Dorsolateral prefrontal cortex (tissue), 120 donors: ENCODE measurements at regions of chr9 and their contacts with region 1.

Region 1: DNA sequence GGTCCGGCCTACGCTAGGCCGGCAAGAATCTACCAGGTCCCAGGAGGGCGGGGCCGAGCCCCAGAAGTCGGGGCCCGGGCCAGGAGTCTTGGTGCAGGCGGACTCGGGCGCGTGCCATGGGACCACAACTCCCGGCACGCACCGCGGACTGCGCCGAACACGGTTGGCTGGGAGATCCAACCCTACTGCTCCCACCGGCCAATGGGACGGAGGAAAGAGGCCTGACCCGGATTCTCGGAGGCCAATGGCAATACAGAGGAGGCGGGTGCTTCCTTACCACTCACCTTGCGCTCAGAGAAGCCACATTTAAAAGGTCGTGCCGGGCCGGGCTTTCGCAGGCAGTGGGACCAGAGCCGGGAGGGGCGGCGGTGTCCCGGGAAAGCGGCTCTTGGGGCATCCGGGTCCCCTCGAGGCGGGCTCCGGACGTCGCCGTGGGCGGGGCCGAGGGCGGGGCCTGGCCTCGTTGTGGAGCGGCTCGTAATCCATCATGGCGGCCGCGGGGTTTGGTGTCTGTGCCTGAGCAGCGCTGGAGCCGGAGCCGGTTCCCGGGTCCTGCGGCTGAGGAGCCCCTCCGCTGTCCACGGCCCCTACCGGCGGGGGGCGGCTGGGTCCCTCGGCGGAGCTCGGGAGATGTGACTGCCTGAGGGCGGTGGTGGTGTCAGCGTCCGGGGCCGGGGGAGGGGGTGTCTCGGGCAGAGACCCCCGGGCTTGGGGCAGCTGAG is 19.1 kb downstream of the EXOSC2 start:
- DNase-seq: peak; percentile 98 to 99 (median 98)
- H3K4me3 ChIP-seq: peak overlapping the region; percentile 74 to 99 (median 93)
- H3K27ac ChIP-seq: peak overlapping the region; percentile 91 to 100 (median 99)
- H3K27me3 ChIP-seq: no peaks in the 10 kb centered on the region
- CTCF ChIP-seq: peak in 11 of 56 donors; percentile 4 to 48 (median 24)

Region 2: DNA sequence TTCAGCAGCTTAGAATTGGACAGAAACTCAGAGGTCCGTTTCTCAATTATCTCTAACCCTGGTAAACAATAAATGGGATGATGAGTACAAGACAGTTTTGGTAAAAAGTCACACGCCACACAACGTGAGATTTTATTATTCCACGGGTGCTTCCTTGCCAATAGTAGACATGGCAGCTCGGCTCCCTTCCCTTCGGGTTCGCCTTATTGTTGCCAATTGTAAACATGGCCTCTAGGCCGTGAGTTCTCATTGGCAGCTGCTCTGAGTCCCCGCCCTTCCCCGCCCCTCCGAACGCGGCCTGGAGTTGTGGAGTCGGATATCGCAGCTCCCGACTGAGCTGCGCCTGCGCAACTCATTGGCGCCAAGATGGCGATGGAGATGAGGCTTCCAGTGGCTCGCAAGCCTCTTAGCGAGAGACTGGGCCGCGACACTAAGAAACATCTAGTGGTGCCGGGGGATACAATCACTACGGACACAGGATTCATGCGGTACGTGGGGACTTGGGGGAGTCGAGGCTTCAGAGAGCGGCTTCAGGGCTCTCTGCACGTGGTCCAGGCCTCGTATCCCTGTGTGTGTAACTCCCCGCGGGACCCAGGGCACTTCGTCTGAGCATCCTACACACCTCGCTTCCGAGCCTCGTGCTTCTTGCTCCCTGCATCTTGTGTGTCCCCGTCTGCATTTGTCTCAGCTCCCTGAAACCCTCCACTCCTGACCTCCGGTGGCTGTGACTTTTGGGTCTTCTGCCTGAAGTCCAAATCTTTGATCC is 19.1 kb before region 1 on chr9 and contains the start of gene EXOSC2:
- intact Hi-C with region 1: loop called in 1 of 2 experiments (anchors 2 kb)
- DNase-seq: peak; percentile 94 to 99 (median 98)
- H3K4me3 ChIP-seq: peak within 1 kb of the TSS; percentile 65 to 98 (median 86)
- H3K27ac ChIP-seq: peak within 1 kb of the TSS; percentile 28 to 94 (median 82)
- H3K27me3 ChIP-seq: no peaks in the 10 kb centered on the region
- CTCF ChIP-seq: peak in 42 of 56 donors; percentile 7 to 63 (median 33)
- total RNA-seq, gene EXOSC2: 24.6 to 43.4 (median 32.7) TPM

Region 3: DNA sequence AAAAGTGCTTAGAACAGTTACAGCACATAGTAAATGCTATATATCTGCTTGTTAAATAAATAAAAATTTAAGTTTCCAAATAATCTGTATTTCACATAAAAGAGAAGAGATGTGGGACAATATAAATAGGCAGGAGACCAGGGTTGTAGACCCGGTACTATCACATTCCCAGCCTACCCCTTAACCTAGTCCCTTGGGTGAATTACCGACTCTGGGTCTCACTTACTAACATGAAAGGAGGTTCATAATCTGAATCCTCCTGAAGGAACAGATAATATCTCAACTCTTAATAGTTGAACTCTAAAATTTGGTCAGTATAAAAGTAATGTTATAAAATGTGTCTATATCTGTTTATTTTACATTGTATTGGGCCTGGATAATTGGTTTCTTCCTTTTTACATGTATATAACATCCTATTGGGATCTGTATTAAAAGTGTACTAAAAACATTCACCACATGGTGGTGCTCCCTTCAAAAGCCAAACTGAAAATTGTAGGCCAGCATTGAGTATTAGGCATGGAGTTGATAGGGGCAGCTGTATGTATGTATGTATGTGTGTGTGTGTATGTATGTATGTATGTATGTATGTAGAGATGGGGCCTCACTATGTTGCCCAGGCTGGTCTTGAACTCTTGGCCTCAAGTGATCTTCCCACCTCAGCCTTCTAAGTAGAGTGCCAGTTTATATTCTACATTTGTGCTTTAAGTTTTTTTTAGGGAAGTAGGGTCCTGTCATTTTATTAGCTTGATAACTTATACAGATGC is 58.1 kb after region 1 on chr9:
- intact Hi-C with region 1: loop called in 1 of 2 experiments (anchors 5 kb)
- DNase-seq: no peak
- H3K4me3 ChIP-seq: no peak overlapping the region
- H3K27ac ChIP-seq: no peak overlapping the region
- H3K27me3 ChIP-seq: no peaks in the 10 kb centered on the region
- CTCF ChIP-seq: peak; percentile 53 to 87 (median 75)

Region 4: DNA sequence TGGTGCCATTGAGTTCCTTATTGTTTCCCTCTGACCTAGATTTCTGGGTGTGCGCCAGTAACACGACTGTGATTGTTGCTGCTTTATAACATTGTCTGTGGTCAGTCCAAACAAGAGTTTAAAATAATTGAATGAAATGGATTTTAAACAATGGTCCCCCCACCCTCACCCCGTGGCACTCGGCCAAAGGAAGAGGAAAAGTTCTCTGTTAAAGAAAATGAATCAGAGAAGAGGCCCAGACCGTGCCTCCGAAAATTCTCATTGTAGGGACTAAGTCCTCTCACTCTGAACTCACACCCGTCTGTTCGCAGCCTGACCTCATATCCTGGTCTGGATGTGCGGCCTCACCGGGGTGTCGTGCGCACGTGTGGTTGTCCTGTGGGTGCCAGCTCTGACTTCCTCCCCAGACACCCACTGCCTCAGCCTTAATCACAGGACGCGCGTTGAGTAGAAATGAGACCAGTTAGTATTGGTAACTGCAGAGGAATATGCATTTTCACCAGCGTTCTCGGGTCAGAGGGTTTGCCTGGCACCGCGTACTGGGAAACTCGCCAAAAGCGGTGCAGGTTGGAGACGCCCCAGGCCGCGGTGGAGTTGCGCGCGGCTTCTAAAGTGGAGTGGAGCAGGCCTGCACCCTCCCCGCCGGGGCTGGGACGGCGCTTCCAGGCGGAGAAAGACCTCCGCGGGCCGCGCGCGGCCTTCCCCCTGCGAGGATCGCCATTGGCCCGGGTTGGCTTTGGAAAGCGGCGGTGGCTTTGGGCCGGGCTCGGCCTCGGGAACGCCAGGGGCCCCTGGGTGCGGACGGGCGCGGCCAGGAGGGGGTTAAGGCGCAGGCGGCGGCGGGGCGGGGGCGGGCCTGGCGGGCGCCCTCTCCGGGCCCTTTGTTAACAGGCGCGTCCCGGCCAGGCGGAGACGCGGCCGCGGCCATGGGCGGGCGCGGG is 121.9 kb after region 1 on chr9 and contains the start of gene ABL1:
- intact Hi-C with region 1: loop called in 1 of 2 experiments (anchors 10 kb)
- DNase-seq: peak in 8 of 10 donors; percentile 46 to 74 (median 58)
- H3K4me3 ChIP-seq: peak within 1 kb of the TSS; percentile 55 to 89 (median 78)
- H3K27ac ChIP-seq: peak within 1 kb of the TSS; percentile 85 to 98 (median 95)
- H3K27me3 ChIP-seq: no peaks in the 10 kb centered on the region
- CTCF ChIP-seq: peak in 3 of 56 donors; percentile 17 to 22 (median 18)
- total RNA-seq, gene ABL1: 32.9 to 97.5 (median 48.2) TPM